A549 (cell line): ENCODE measurements at regions of chr19 and their contacts with region 1.

Region 1: GRCh38 chr19:41706741-41707501 is 1.5 kb upstream of the CEACAM5 start:
- DNase-seq: peak; percentile 91 to 99
- ATAC-seq: peak; percentile 79 to 94
- H3K4me3 ChIP-seq: peak overlapping the region; percentile 39
- H3K27ac ChIP-seq: peak overlapping the region; percentile 65 to 84; a peak in 5 of 6 replicates
- H3K4me1 ChIP-seq: peaks cover 28% of the 10 kb centered on the region
- CTCF ChIP-seq: peak; percentile 100
- EP300 ChIP-seq: no peak
- POLR2A ChIP-seq: no peak
- RAD21 ChIP-seq: peak; percentile 61 to 86

Region 2: GRCh38 chr19:41597600-41598041 is 109.3 kb before region 1 on chr19:
- CTCF ChIA-PET with region 1: interaction called, 16 read pairs
- POLR2A ChIA-PET with region 1: no interaction called
- DNase-seq: peak; percentile 85 to 99
- ATAC-seq: peak; percentile 70 to 90; a peak in 5 of 6 replicates
- H3K4me3 ChIP-seq: no peak overlapping the region
- H3K27ac ChIP-seq: no peak overlapping the region
- H3K4me1 ChIP-seq: no peaks in the 10 kb centered on the region
- CTCF ChIP-seq: peak; percentile 99
- EP300 ChIP-seq: no peak
- POLR2A ChIP-seq: no peak
- RAD21 ChIP-seq: peak; percentile 44 to 54; a peak in 3 of 5 replicates

Region 3: GRCh38 chr19:41671491-41671890 is 35.4 kb before region 1 on chr19:
- CTCF ChIA-PET with region 1: interaction called, 24 read pairs
- POLR2A ChIA-PET with region 1: no interaction called
- DNase-seq: no peak
- ATAC-seq: no peak
- H3K4me3 ChIP-seq: no peak overlapping the region
- H3K27ac ChIP-seq: no peak overlapping the region
- H3K4me1 ChIP-seq: no peaks in the 10 kb centered on the region
- CTCF ChIP-seq: no peak
- EP300 ChIP-seq: no peak
- POLR2A ChIP-seq: no peak
- RAD21 ChIP-seq: no peak

Region 4: GRCh38 chr19:41726493-41726892 is 19.6 kb after region 1 on chr19:
- CTCF ChIA-PET with region 1: interaction called, 165 read pairs
- POLR2A ChIA-PET with region 1: no interaction called
- DNase-seq: no peak
- ATAC-seq: peak in 1 of 2 experiments; percentile 43; a peak in 2 of 6 replicates
- H3K4me3 ChIP-seq: no peak overlapping the region
- H3K27ac ChIP-seq: no peak overlapping the region
- H3K4me1 ChIP-seq: no peaks in the 10 kb centered on the region
- CTCF ChIP-seq: no peak
- EP300 ChIP-seq: no peak
- POLR2A ChIP-seq: no peak
- RAD21 ChIP-seq: no peak

Region 5: GRCh38 chr19:41746593-41747227 is 39.8 kb after region 1 on chr19:
- CTCF ChIA-PET with region 1: interaction called, 128 read pairs
- POLR2A ChIA-PET with region 1: no interaction called
- DNase-seq: peak; percentile 84 to 87
- ATAC-seq: peak; percentile 90 to 98
- H3K4me3 ChIP-seq: no peak overlapping the region
- H3K27ac ChIP-seq: no peak overlapping the region
- H3K4me1 ChIP-seq: no peaks in the 10 kb centered on the region
- CTCF ChIP-seq: peak; percentile 96
- EP300 ChIP-seq: no peak
- POLR2A ChIP-seq: no peak
- RAD21 ChIP-seq: peak; percentile 94 to 96

Region 6: DNA sequence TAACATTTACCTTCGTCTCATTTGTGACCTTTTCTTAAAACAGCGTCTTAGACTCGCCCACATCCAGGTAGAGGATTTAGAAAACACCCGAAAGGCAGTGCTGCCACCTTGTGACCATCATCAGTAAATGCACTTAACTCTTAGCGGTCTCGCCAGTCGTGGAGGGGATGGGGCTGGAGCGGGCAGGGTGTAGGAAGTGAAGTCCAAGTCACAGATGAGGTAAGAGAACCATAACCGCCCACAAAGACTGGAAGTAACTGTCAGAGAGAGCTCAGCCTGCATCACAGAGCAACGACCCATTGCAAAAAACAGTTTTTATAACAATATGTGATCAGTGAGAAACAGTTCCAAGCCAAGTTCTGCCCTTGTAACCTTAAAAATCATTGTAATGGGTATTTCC is 78.7 kb after region 1 on chr19:
- CTCF ChIA-PET with region 1: interaction called, 33 read pairs
- POLR2A ChIA-PET with region 1: no interaction called
- DNase-seq: peak; percentile 93 to 99
- ATAC-seq: peak; percentile 74 to 92
- H3K4me3 ChIP-seq: no peak overlapping the region
- H3K27ac ChIP-seq: no peak overlapping the region
- H3K4me1 ChIP-seq: peaks cover 5% of the 10 kb centered on the region; the same call in 1 of the 3 replicates
- CTCF ChIP-seq: peak; percentile 99
- EP300 ChIP-seq: no peak
- POLR2A ChIP-seq: no peak
- RAD21 ChIP-seq: peak; percentile 80 to 88

Region 7: DNA sequence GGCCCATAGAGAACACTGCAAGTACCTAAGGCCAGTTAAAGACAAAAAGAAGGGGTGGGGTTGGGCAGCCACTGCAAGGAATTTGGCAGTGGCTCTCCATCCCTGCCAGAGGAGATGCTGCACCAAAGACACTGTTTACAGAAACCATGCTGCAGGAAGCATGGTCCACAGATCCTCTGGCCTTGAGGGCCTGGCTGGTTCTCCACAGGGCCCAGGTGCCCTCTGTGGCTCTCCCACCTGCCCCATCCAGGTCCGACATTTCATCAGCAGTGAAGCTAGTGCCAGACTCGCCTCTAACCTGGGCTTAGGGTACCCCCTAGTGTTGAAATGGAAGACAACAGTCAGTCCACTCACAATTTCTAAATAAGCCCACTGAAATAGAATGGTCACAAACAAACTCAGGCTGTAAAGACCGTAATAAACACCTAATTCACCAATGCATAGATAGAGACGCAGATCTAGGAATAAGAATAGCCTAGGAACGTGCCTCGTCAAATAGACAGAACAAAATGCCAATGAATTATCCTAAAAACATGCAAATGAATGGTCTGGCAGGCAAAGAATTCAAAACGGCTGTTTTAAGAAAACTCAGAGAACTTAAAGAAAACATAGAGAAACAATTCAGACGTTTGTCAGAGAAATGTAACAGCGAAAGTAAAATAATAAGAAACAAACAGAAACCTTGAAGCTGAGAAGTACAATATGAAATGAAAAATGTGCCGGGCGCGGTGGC is 114.2 kb after region 1 on chr19:
- CTCF ChIA-PET with region 1: interaction called, 10 read pairs
- POLR2A ChIA-PET with region 1: interaction called, 6 read pairs
- DNase-seq: peak; percentile 82 to 94
- ATAC-seq: peak; percentile 92 to 96
- H3K4me3 ChIP-seq: no peak overlapping the region
- H3K27ac ChIP-seq: no peak overlapping the region
- H3K4me1 ChIP-seq: no peaks in the 10 kb centered on the region
- CTCF ChIP-seq: peak; percentile 91
- EP300 ChIP-seq: no peak
- POLR2A ChIP-seq: no peak
- RAD21 ChIP-seq: peak; percentile 86 to 96